SK-N-SH (cell line): ENCODE measurements at regions of chr7 and their contacts with region 1.

Region 1: GRCh38 chr7:113015032-113015645 is 71.5 kb downstream of the GPR85 start:
- DNase-seq: peak; percentile 55
- H3K4me3 ChIP-seq: no peak overlapping the region
- H3K27ac ChIP-seq: no peak overlapping the region
- H3K4me1 ChIP-seq: no peaks in the 10 kb centered on the region; a peak in 2 of 4 replicates
- H3K27me3 ChIP-seq: no peaks in the 10 kb centered on the region
- CTCF ChIP-seq: peak; percentile 90
- EP300 ChIP-seq: no peak
- RAD21 ChIP-seq: peak; percentile 84

Region 2: DNA sequence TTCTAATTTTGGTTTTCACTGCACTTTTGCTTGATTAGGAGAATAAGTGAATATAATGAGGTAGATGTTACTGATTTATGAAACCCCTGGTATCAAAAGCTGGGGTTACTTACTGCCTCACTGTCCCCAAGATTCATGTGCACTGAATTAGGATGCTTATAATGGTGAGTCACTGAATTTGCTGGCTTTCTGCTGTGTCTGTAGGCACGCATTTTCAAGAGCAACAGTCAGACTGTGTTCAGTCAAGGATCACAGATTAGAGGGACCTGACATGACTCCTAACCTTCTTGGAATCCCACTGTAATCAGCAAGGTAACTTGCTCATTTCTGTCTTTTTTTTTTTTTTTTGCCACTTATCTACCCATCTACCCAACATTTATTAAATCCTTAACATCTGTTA is 11.8 kb after region 1 on chr7:
- CTCF ChIA-PET with region 1: interaction called, 15 read pairs
- POLR2A ChIA-PET with region 1: no interaction called
- DNase-seq: no peak
- H3K4me3 ChIP-seq: no peak overlapping the region
- H3K27ac ChIP-seq: no peak overlapping the region
- H3K4me1 ChIP-seq: no peaks in the 10 kb centered on the region; a peak in 1 of 4 replicates
- H3K27me3 ChIP-seq: no peaks in the 10 kb centered on the region
- CTCF ChIP-seq: no peak
- EP300 ChIP-seq: no peak
- RAD21 ChIP-seq: no peak

Region 3: GRCh38 chr7:113118074-113118959 is 103.2 kb after region 1 on chr7 and contains the start of gene SMIM30:
- CTCF ChIA-PET with region 1: interaction called, 15 read pairs
- POLR2A ChIA-PET with region 1: interaction called, 3 read pairs
- DNase-seq: peak; percentile 85
- H3K4me3 ChIP-seq: peak within 1 kb of the TSS; percentile 80 to 89
- H3K27ac ChIP-seq: peak within 1 kb of the TSS; percentile 65 to 94
- H3K4me1 ChIP-seq: peaks cover 7 to 24% of the 10 kb centered on the region in 2 experiments; a peak in 3 of 4 replicates
- H3K27me3 ChIP-seq: no peaks in the 10 kb centered on the region
- CTCF ChIP-seq: no peak
- EP300 ChIP-seq: peak in 1 of 2 experiments; percentile 45; a peak in 1 of 4 replicates
- RAD21 ChIP-seq: 0 out of 2 replicates have a peak, but pooled peaks have one; percentile 7
- polyA plus RNA-seq, gene SMIM30: 46.5 and 68.8 TPM in 2 replicates

Region 4: DNA sequence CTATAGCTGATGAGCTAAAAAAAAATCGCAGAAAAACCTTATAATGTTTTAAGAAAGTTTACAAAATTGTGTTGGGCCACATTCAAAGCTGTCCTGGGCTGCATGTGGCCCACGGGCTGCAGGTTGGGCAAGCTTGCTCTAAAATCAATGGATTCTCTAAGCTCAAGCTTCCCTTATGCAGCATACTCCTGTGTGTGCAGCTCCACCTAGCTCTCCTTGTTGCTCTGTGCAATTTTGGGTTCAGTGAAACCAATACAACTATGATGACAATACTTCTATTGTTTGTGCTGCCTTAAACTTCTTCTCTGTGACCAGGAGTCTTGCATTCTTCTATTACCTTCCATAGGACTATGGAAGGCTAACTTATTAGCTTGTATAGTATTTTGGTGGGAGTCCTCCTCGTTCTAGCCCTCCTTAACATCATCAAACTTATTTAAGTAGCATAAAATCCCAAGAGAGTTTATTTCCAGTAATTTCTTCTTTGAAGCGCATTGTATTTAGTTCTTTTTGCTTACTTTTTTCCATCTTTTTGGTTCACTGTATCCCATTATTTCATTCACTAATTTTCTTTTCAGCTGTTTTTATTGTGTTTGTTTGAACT is 274.1 kb after region 1 on chr7:
- CTCF ChIA-PET with region 1: interaction called, 34 read pairs
- POLR2A ChIA-PET with region 1: no interaction called
- DNase-seq: peak; percentile 42
- H3K4me3 ChIP-seq: no peak overlapping the region
- H3K27ac ChIP-seq: no peak overlapping the region
- H3K4me1 ChIP-seq: no peaks in the 10 kb centered on the region
- H3K27me3 ChIP-seq: no peaks in the 10 kb centered on the region
- CTCF ChIP-seq: peak; percentile 84
- EP300 ChIP-seq: no peak
- RAD21 ChIP-seq: peak; percentile 90